GM13977 (cell line): ENCODE measurements at regions of chr3 and their contacts with region 1.

Region 1: DNA sequence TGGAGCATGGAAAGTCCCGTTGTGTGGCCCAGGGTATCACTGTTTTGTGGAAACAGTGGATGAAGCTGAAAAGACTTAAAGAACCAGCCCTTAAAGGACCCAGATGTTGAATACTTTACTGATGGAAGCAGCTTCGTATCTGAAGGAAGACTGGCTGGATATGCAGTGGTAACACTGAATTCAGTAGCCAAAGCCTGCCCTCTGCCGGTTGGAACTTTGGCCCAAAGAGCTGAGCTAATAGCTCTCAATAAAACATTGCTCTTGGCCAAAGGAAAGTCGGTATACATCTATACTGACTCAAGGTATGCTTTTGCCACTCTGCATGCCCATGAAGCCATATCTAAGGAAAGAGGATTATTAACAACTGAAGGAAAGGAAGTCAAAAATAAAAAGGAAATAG is 885.4 kb downstream of the PDCD6IP start:
- DNase-seq: peak; percentile 10
- CTCF ChIP-seq: peak; percentile 74

Region 2: DNA sequence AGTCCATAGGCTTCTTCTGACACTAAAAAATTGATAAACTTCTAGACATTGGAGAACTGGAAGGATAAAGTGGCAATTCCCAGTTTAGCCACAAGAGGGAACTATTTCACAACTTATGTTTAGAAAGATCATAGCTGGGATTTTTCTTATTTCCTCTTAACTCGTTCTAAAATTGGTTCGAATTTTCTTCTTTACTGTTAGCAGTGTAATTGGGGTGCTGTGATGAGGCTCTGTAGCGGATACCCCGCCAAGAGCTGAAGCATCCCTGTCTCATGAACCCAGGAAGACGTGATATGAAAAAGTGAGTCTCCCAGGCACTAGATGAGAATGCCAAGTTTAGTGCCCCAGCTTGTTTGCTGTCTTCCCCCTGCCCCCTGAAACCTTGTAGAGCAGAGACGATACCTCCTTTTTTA is 800.3 kb before region 1 on chr3:
- in situ Hi-C with region 1: loop called (anchors 25 kb)
- DNase-seq: peak; percentile 47
- CTCF ChIP-seq: peak; percentile 76

Region 3: GRCh38 chr3:34212656-34213055 is 471.2 kb before region 1 on chr3:
- in situ Hi-C with region 1: no loop called
- DNase-seq: no peak
- CTCF ChIP-seq: no peak